ENCODE measurements at regions of chr7 and their contacts with region 1.

Region 1: GRCh38 chr7:28551331-28551730 is 139.0 kb downstream of the CREB5 start:
- DNase-seq: no peak
- CTCF ChIP-seq: no peak

Region 2: GRCh38 chr7:28358423-28358868 is 192.9 kb before region 1 on chr7:
- CTCF ChIA-PET with region 1: no interaction called
- POLR2A ChIA-PET with region 1: no interaction called
- DNase-seq: no peak
- CTCF ChIP-seq: no peak

Region 3: GRCh38 chr7:28564755-28565374 is 13.5 kb after region 1 on chr7:
- CTCF ChIA-PET with region 1: interaction called, 19 read pairs
- POLR2A ChIA-PET with region 1: no interaction called
- DNase-seq: no peak
- CTCF ChIP-seq: no peak

Measured in GM10248 (cell line).